PC-9 (cell line): ENCODE measurements at regions of chr1 and their contacts with region 1.

Region 1: GRCh38 chr1:205172729-205173366 is 38.7 kb downstream of the DSTYK start:
- DNase-seq: peak; percentile 20 to 89
- H3K4me3 ChIP-seq: no peak overlapping the region
- H3K27ac ChIP-seq: peak overlapping the region; percentile 60
- H3K4me1 ChIP-seq: peaks cover 36% of the 10 kb centered on the region
- H3K27me3 ChIP-seq: no peaks in the 10 kb centered on the region
- CTCF ChIP-seq: no peak

Region 2: DNA sequence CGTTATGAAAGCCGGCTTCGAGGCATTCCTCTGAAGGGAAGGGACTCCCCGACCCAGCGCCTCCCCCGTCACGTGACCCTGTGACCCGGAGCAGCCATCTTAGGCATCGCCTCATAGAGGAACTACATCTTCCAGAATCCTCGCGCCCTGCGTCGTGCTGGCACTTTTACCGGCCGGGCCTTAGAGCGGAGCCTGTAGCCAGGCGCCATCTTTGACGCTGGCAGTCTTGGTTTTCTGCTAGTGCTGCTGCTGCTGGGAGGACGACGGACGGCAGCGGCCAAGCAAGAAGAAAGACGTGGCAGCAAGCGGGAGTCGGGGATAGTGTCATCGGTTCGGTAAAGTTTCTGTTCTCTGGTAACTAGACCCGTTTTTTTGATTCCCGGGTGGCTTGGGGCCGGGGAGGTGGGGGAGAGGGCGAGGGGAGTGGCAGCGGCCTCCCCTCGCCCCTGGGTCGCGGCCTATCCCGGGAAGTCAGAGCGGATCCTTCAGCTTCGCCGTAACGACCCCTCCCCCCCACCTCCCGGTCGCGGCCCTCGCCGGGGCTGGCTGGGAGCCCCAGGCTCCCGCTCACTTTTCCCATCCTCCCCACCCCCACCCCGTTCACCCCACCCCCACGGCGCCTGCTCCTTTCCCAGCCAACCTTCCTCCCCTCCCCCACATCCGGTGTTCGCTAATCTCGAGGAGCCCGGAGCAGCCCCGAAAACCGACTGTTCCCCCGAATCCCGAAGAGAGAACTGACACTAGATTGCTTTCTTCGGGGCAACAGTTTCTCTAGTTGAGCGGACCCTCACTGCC is 1377.2 kb before region 1 on chr1 and contains the starts of genes ZBED6 and ZC3H11A:
- CTCF ChIA-PET with region 1: no interaction called
- POLR2A ChIA-PET with region 1: interaction called, 12 read pairs
- intact Hi-C with region 1: no loop called
- DNase-seq: peak; percentile 96 to 98
- H3K4me3 ChIP-seq: peak within 1 kb of the TSS; percentile 70
- H3K27ac ChIP-seq: peak within 1 kb of the TSS; percentile 91
- H3K4me1 ChIP-seq: peaks cover 22% of the 10 kb centered on the region
- H3K27me3 ChIP-seq: no peaks in the 10 kb centered on the region
- CTCF ChIP-seq: no peak
- total RNA-seq, gene ZBED6: 22.7 and 32.7 TPM in 2 replicates
- total RNA-seq, gene ZC3H11A: 91.0 and 91.1 TPM in 2 replicates

Region 3: DNA sequence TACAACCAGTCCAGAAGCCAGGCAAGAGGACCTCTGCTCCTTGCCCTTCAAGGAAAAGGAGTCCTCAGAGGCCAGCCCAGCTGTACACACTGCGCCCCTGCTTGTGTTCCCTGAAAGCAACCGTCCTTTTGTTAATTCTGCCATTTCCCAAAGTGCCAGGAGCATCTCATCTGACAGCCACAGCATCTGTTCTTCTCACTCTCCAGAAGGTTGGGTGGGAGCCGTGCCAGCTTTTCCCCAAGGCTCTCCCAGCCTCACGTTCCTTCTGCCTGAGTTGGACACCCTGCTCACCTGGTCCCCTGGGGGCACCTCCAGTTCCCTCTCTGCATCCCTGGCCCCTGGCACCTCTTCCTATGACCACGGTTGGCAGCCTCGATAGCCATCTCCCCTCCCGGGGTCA is 140.3 kb before region 1 on chr1:
- CTCF ChIA-PET with region 1: no interaction called
- POLR2A ChIA-PET with region 1: no interaction called
- intact Hi-C with region 1: no loop called
- DNase-seq: no peak
- H3K4me3 ChIP-seq: no peak overlapping the region
- H3K27ac ChIP-seq: no peak overlapping the region
- H3K4me1 ChIP-seq: no peaks in the 10 kb centered on the region
- H3K27me3 ChIP-seq: peaks cover 100% of the 10 kb centered on the region
- CTCF ChIP-seq: no peak

Region 4: DNA sequence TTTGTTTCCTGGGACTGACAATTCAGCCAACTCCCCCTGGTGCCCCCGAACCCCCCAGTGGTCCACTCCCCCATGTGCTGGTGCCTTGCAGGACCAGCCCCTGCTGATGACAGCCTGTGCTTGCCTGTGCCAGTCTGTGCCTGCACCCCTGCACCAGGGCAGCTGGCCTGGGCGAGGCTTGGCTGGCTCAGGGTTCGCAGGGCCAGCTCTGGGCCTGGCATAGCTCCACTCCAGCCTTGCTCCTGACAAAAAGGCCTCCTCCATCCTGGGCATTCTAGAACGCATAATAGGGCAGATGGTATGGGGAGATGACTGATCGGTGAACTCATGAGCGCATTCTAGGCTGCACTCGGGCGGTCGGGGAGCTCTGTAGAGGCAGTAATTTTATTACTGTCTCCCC is 124.5 kb before region 1 on chr1:
- CTCF ChIA-PET with region 1: no interaction called
- POLR2A ChIA-PET with region 1: no interaction called
- intact Hi-C with region 1: no loop called
- DNase-seq: no peak
- H3K4me3 ChIP-seq: no peak overlapping the region
- H3K27ac ChIP-seq: no peak overlapping the region
- H3K4me1 ChIP-seq: no peaks in the 10 kb centered on the region
- H3K27me3 ChIP-seq: peaks cover 99% of the 10 kb centered on the region
- CTCF ChIP-seq: no peak

Region 5: GRCh38 chr1:205199090-205199930 is 26.5 kb after region 1 on chr1:
- CTCF ChIA-PET with region 1: no interaction called
- POLR2A ChIA-PET with region 1: no interaction called
- intact Hi-C with region 1: loop called (anchors 1 kb)
- DNase-seq: no peak
- H3K4me3 ChIP-seq: no peak overlapping the region
- H3K27ac ChIP-seq: no peak overlapping the region
- H3K4me1 ChIP-seq: no peaks in the 10 kb centered on the region
- H3K27me3 ChIP-seq: no peaks in the 10 kb centered on the region
- CTCF ChIP-seq: no peak

Region 6: DNA sequence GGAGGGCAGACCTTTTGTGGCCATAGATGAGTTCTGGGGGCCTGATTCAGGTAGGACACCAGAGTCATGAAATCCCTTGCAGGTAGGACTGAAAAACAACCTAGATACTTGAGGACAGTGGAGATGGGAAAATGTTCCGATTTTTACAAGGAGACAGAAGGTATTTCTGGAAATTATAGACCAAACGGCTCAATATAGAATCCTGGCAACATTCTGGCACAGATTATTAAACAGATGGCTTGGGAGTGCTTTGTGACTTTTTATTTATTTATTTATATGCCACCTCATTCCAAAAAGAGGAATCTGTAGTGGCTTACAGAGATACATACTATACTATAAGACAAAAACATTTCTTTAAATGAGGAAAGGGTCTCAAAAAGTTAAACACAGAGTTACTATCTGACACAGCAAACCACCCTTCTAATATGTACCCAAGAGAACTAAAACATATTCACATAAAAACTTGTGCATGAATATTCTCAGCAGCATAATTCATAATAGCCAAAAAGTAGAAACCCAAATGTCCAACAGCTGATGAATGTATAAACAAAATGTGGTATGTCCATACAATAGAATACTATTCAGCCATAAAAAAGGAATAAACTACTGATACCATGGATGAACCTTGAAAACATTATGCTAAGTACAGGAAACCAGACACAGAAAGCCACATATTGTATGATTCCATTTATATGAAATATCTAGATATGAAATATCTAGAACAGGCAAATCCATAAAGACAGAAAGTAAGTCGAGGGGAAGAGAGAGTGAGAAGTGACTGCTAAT is 381.4 kb after region 1 on chr1:
- CTCF ChIA-PET with region 1: no interaction called
- POLR2A ChIA-PET with region 1: no interaction called
- intact Hi-C with region 1: no loop called
- DNase-seq: no peak
- H3K4me3 ChIP-seq: no peak overlapping the region
- H3K27ac ChIP-seq: no peak overlapping the region
- H3K4me1 ChIP-seq: no peaks in the 10 kb centered on the region
- H3K27me3 ChIP-seq: no peaks in the 10 kb centered on the region
- CTCF ChIP-seq: no peak